ENCODE measurements at regions of chr1 and their contacts with region 1.

Region 1: GRCh38 chr1:64966158-64966971 is at the start of gene JAK1:
- DNase-seq: peak; percentile 90 to 93
- ATAC-seq: peak; percentile 88 to 93 (median 91)
- H3K4me3 ChIP-seq: peak within 1 kb of the TSS; percentile 88
- H3K27ac ChIP-seq: peak within 1 kb of the TSS; percentile 98
- H3K4me1 ChIP-seq: peaks cover 40% of the 10 kb centered on the region
- H3K27me3 ChIP-seq: no peaks in the 10 kb centered on the region
- CTCF ChIP-seq: peak; percentile 14
- total RNA-seq, gene JAK1: 101 to 137 (median 119) TPM

Region 2: DNA sequence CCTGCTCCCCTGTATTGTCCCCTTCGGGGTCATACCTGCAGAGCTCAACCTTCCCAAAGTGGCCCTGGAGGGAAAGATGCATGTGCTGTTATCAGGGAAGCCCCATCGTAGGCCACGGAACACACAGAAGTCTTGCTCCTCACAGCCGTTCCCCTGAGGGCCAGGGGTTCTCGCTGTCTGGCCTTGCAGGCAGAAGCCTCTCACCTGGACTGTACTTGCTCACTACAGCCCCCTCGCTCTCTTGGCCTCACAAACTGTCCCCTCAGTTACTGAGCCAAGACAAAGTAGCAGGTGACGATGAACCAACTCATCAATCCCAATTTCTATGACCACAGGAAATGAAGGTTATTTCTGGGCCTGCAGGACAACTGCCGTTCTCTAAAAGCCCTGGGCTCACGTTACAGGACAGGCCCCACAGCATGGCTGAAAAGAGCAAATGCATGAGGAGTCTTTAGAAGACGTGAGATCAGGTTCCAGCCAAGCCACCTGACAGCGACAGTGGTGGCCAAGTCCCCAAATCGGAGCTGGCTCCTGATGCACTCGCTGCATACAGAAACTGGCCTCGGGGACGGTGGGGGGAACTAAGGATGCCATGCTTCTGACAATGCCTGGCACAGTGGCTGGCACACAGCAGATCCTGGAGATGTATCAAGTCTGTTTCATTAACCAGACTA is 126.5 kb before region 1 on chr1:
- intact Hi-C with region 1: loop called in 1 of 2 experiments (anchors 5 kb)
- DNase-seq: peak; percentile 69 to 90
- ATAC-seq: peak; percentile 94 to 96 (median 94)
- H3K4me3 ChIP-seq: peak overlapping the region; percentile 6
- H3K27ac ChIP-seq: peak overlapping the region; percentile 91
- H3K4me1 ChIP-seq: peaks cover 19% of the 10 kb centered on the region
- H3K27me3 ChIP-seq: no peaks in the 10 kb centered on the region
- CTCF ChIP-seq: no peak

Region 3: GRCh38 chr1:64891448-64891825 is 74.9 kb before region 1 on chr1:
- intact Hi-C with region 1: loop called (anchors 5 kb)
- DNase-seq: no peak
- ATAC-seq: peak; percentile 24 to 55 (median 52)
- H3K4me3 ChIP-seq: peak overlapping the region; percentile 43
- H3K27ac ChIP-seq: peak overlapping the region; percentile 79
- H3K4me1 ChIP-seq: peaks cover 76% of the 10 kb centered on the region
- H3K27me3 ChIP-seq: no peaks in the 10 kb centered on the region
- CTCF ChIP-seq: no peak

Region 4: DNA sequence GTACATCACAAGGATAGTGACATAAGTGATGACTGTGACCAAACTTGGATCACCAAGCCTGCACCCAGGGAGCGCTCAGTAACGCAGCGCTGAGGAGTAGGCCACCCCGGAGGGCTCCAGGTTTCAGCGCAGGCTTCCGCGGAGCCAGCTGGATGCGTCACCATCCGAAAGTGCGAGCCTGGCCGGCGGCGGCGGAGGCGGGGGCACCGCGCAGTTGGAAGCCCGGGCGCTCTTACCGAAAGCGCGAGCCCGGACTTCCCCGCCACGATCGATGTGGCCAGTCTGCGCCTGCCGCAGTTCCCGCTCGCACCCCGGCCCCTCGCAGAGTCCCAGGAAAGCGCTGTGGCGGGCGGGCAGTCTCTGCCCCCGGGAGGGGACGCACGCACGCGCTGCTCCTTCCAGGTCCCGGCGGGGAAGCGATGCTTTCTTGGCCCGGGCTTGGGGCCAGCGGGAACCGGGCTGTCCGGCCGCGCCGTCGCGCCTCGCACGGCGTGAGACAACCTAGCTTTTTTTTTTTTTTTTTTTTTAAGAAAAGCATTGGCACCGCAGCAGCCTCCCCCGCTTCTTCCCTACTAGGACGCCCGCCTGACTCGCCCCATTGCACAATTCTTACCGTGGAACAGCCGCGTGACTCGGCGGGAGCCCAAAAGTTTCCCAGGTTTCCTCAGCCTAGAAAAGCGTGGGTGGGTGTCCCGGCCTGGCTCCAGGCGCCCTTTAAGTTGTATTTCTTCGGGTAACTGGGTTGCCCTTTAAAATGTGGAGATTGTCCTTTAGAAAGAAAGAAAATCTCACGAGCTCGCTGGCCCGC is 36.3 kb after region 1 on chr1:
- intact Hi-C with region 1: loop called in 1 of 2 experiments (anchors 5 kb)
- DNase-seq: peak; percentile 91 to 95
- ATAC-seq: peak; percentile 95 to 97 (median 96)
- H3K4me3 ChIP-seq: peak overlapping the region; percentile 84
- H3K27ac ChIP-seq: peak overlapping the region; percentile 99
- H3K4me1 ChIP-seq: peaks cover 11% of the 10 kb centered on the region
- H3K27me3 ChIP-seq: no peaks in the 10 kb centered on the region
- CTCF ChIP-seq: no peak

Region 5: GRCh38 chr1:66294692-66295384 is 1328.5 kb after region 1 on chr1:
- intact Hi-C with region 1: loop called in 1 of 2 experiments (anchors 5 kb)
- DNase-seq: no peak
- ATAC-seq: peak; percentile 69 to 90 (median 78)
- H3K4me3 ChIP-seq: no peak overlapping the region
- H3K27ac ChIP-seq: peak overlapping the region; percentile 53
- H3K4me1 ChIP-seq: peaks cover 19% of the 10 kb centered on the region
- H3K27me3 ChIP-seq: no peaks in the 10 kb centered on the region
- CTCF ChIP-seq: no peak